ENCODE measurements at regions of chr10 and their contacts with region 1.

Region 1: DNA sequence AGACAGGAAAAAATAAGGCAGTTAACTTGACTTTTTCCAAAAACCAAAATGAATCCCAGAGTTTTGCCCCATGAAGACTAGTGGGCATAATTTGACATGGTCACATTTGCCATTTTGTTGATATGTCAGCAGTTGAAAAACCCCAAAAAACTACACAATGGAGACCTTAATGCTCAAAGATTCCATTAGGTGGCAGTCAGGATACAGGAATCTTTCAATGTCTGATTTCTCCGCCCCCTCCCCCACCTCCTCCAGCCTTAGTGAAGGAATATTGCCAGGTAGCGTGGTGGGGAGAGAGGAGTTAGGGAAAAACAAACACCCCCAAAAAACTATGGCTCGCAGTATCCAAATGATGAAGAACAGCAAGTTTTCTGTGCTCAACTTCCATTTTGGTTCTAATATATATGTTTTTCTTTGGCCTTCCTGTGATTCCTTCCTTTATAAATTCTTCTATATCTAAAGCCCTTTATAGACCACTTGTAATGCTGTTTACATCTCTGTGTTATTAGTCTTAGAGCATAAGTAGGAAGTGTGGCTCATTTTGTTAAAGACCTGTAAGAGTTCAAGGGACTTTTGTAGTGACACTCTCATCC is 6.7 kb upstream of the SMNDC1 start:
- DNase-seq: peak; percentile 54 to 79
- ATAC-seq: peak; percentile 84 to 86
- H3K4me3 ChIP-seq: no peak overlapping the region
- H3K27ac ChIP-seq: peak overlapping the region; percentile 76 to 84
- H3K4me1 ChIP-seq: peaks cover 57% of the 10 kb centered on the region
- CTCF ChIP-seq: peak; percentile 90
- EP300 ChIP-seq: peak in 1 of 2 experiments; percentile 39; a peak in 1 of 5 replicates
- POLR2A ChIP-seq: no peak
- RAD21 ChIP-seq: peak; percentile 97 to 100

Region 2: GRCh38 chr10:110214380-110214826 is 97.0 kb before region 1 on chr10:
- CTCF ChIA-PET with region 1: no interaction called
- POLR2A ChIA-PET with region 1: no interaction called
- DNase-seq: no peak
- ATAC-seq: no peak
- H3K4me3 ChIP-seq: no peak overlapping the region
- H3K27ac ChIP-seq: no peak overlapping the region
- H3K4me1 ChIP-seq: peaks cover 8% of the 10 kb centered on the region
- CTCF ChIP-seq: no peak
- EP300 ChIP-seq: no peak
- POLR2A ChIP-seq: no peak
- RAD21 ChIP-seq: no peak

Region 3: DNA sequence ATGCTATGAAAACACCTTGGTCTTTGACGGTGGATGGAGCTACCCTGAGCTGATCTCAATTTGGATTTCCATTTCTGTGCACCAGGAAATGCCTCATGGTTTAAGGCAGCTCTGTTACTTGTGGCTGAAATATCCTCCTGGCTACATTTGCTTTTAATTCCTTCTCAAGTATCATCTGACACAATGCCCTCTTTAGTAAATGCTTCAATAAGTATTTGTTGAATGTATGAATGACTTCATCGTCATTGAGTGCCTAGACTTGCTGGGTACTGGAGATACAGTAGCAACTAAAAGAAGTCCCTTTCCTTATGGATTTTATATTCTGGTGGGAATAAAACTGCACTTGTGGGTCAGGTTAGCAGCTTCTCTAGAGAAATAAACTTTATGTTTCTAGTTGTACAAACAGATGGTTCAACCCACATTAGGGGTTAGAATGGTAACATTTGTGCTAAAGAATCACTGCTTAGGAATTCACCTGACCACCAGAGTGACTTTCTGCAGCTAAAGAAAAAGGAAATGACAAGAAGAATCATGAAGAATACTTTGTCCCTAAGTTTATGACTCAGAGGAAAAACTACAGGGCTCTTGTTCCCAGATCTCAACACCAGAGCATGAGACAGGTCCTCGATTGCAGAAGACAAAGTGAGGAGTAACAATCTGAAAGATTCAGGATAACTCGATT is 15.0 kb after region 1 on chr10:
- CTCF ChIA-PET with region 1: interaction called, 16 read pairs
- POLR2A ChIA-PET with region 1: no interaction called
- DNase-seq: no peak
- ATAC-seq: no peak
- H3K4me3 ChIP-seq: no peak overlapping the region
- H3K27ac ChIP-seq: peak overlapping the region; percentile 66 to 68; a peak in 4 of 6 replicates
- H3K4me1 ChIP-seq: peaks cover 35% of the 10 kb centered on the region
- CTCF ChIP-seq: no peak
- EP300 ChIP-seq: no peak
- POLR2A ChIP-seq: no peak
- RAD21 ChIP-seq: no peak

Region 4: GRCh38 chr10:110340816-110341215 is 29.4 kb after region 1 on chr10:
- CTCF ChIA-PET with region 1: no interaction called
- POLR2A ChIA-PET with region 1: no interaction called
- DNase-seq: no peak
- ATAC-seq: no peak
- H3K4me3 ChIP-seq: no peak overlapping the region
- H3K27ac ChIP-seq: no peak overlapping the region
- H3K4me1 ChIP-seq: peaks cover 24% of the 10 kb centered on the region
- CTCF ChIP-seq: no peak
- EP300 ChIP-seq: no peak
- POLR2A ChIP-seq: no peak
- RAD21 ChIP-seq: no peak

Region 5: DNA sequence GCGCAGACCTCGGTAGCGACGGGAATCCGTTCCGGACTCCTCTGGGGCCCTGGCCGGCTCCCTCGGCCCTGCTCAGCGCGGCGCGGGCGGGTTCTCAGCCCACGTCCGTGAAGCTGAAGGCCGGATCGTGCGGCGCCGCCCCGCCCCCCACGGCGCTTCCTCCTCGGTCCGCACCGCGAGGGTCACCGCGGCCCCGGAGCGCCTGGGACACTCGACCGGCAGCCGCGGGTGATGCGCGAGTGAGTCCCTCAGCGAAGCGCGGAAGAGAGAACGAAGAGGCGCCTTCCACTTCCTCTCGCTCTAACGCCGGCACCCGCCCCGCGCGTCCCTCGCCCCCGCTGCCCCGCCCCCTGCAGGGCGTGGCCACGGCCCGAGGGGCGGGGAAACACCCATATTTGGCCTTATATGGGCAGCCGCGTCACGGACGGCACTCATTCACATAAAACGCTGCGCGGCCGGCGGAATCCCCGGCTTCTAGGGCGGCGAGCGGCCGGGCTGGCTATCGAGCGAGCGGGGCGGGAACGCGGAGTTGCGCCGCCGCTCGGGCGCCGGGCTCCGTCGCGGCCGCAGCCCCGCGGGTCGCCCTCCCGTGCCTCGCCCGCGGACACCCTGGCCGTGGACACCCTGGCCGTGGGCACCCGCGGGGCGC is 186.1 kb after region 1 on chr10 and contains the start of gene DUSP5:
- CTCF ChIA-PET with region 1: interaction called, 10 read pairs
- POLR2A ChIA-PET with region 1: no interaction called
- DNase-seq: peak; percentile 85 to 93
- ATAC-seq: peak; percentile 48 to 50
- H3K4me3 ChIP-seq: peak within 1 kb of the TSS; percentile 86
- H3K27ac ChIP-seq: peak within 1 kb of the TSS; percentile 96
- H3K4me1 ChIP-seq: peaks cover 49% of the 10 kb centered on the region
- CTCF ChIP-seq: peak; percentile 19; the same call in 1 of the 3 replicates
- EP300 ChIP-seq: no peak
- POLR2A ChIP-seq: peak; percentile 98
- RAD21 ChIP-seq: peak; percentile 9 to 22; a peak in 3 of 5 replicates
- polyA plus RNA-seq, gene DUSP5: 152 and 171 TPM in 2 replicates

Region 6: GRCh38 chr10:110600487-110601101 is 289.1 kb after region 1 on chr10:
- CTCF ChIA-PET with region 1: interaction called, 44 read pairs
- POLR2A ChIA-PET with region 1: no interaction called
- DNase-seq: peak; percentile 27 to 82
- ATAC-seq: peak; percentile 71 to 91; a peak in 5 of 6 replicates
- H3K4me3 ChIP-seq: no peak overlapping the region
- H3K27ac ChIP-seq: peak overlapping the region in 1 of 2 experiments; percentile 22; a peak in 1 of 6 replicates
- H3K4me1 ChIP-seq: peaks cover 3% of the 10 kb centered on the region; the same call in 1 of the 3 replicates
- CTCF ChIP-seq: peak; percentile 82
- EP300 ChIP-seq: no peak
- POLR2A ChIP-seq: no peak
- RAD21 ChIP-seq: peak; percentile 65

Measured in A549 (cell line).